Spleen (tissue), 13 donors: ENCODE measurements at regions of chr7 and their contacts with region 1.

Region 1: DNA sequence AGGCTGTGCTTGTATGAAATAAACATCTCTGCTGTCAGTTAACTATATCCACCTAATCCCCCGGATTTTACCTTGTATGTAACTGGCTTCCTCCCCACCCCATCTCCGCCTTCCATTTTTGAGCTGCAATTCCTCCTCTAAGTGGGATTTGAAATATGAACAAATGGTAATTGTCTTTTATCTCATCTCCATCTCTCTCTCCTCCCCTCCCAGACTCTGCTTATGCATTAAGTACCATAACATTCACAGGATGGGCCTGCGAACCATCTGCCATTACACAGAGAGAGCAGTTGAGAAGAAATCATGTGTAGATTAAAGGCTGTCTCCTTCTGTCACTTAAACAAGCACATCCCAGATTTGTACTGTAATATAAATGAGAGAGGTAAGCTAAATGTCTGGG is 1169.9 kb downstream of the TYW1 start:
- DNase-seq: no peak
- H3K4me3 ChIP-seq: no peak overlapping the region
- H3K27ac ChIP-seq: no peak overlapping the region
- H3K4me1 ChIP-seq: no peaks in the 10 kb centered on the region
- H3K27me3 ChIP-seq: peaks cover 0 to 2% (median 0%) of the 10 kb centered on the region in 7 donors
- CTCF ChIP-seq: no peak
- POLR2A ChIP-seq: no peak

Region 2: DNA sequence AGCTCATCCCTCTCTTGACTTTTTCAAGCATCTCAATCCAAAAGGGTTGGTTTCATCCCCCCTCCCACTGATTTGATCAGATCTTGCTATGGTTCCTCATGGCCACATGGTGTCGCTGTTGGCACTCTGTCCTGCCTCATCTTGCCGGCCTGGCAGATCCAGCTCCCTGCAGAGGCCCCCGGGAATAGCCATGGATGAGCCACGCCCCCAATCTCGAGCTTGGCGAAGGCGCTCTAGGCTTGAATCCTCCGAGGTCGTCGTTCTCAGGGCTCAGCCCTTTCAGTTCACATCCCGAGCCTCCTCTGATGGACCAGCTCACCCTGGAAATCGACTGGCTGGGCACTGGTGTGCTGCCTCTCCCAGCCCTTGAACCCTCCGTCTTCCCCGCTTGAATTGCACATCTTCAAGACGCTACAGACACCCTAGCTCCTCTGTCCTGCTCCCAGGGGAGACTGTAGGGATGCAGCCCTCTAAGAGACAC is 541.2 kb before region 1 on chr7:
- intact Hi-C with region 1: loop called (anchors 10 kb)
- DNase-seq: peak; percentile 79
- H3K4me3 ChIP-seq: no peak overlapping the region
- H3K27ac ChIP-seq: no peak overlapping the region
- H3K4me1 ChIP-seq: peaks cover 0 to 5% (median 4%) of the 10 kb centered on the region in 6 donors
- H3K27me3 ChIP-seq: peaks cover 0 to 41% (median 0%) of the 10 kb centered on the region in 7 donors
- CTCF ChIP-seq: peak in 10 of 11 experiments; percentile 32 to 73 (median 64)
- POLR2A ChIP-seq: no peak

Region 3: GRCh38 chr7:67913604-67914003 is 252.9 kb before region 1 on chr7:
- intact Hi-C with region 1: no loop called
- DNase-seq: no peak
- H3K4me3 ChIP-seq: no peak overlapping the region
- H3K27ac ChIP-seq: no peak overlapping the region
- H3K4me1 ChIP-seq: no peaks in the 10 kb centered on the region
- H3K27me3 ChIP-seq: no peaks in the 10 kb centered on the region
- CTCF ChIP-seq: no peak
- POLR2A ChIP-seq: no peak

Region 4: DNA sequence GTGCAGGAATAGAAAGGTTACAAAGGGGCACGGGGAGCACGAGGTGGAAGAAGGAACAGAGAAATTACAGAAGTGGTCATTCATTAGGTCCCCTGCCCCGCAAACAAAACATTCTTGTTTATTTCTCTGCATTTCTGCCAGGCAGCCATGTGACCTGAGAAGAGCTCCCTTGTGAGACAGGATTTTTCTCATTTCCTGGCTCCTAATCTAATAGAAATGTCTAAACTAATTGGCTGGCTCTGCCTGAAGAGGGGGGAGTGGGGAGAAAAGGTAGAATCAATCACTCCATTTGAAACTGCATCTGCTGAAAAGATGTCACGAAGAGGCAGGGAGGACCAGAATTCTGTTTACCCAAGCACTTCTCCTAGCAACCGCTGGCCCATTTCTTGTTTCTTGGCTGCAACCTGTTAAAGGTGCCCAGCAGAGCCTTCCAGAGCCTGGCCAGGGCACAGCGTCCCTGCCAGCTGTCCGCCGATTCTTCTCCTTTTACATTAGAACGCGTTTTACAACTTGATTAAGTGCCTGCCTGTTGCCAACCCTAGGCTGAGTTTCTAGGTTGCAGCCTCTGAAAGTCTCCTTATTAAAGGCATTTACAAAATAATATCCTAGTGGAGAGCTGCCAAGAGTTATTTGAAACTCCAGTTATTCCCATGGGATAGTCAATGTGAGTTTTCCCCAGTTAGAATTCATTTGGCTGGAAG is 57.7 kb after region 1 on chr7:
- intact Hi-C with region 1: no loop called
- DNase-seq: no peak
- H3K4me3 ChIP-seq: no peak overlapping the region
- H3K27ac ChIP-seq: no peak overlapping the region
- H3K4me1 ChIP-seq: no peaks in the 10 kb centered on the region
- H3K27me3 ChIP-seq: peaks cover 0 to 4% (median 0%) of the 10 kb centered on the region in 7 donors
- CTCF ChIP-seq: no peak
- POLR2A ChIP-seq: no peak

Region 5: GRCh38 chr7:68364886-68365625 is 198.5 kb after region 1 on chr7:
- intact Hi-C with region 1: no loop called
- DNase-seq: no peak
- H3K4me3 ChIP-seq: no peak overlapping the region
- H3K27ac ChIP-seq: no peak overlapping the region
- H3K4me1 ChIP-seq: no peaks in the 10 kb centered on the region
- H3K27me3 ChIP-seq: peaks cover 0 to 8% (median 0%) of the 10 kb centered on the region in 7 donors
- CTCF ChIP-seq: no peak
- POLR2A ChIP-seq: no peak